GM13977 (cell line): ENCODE measurements at regions of chr13 and their contacts with region 1.

Region 1: DNA sequence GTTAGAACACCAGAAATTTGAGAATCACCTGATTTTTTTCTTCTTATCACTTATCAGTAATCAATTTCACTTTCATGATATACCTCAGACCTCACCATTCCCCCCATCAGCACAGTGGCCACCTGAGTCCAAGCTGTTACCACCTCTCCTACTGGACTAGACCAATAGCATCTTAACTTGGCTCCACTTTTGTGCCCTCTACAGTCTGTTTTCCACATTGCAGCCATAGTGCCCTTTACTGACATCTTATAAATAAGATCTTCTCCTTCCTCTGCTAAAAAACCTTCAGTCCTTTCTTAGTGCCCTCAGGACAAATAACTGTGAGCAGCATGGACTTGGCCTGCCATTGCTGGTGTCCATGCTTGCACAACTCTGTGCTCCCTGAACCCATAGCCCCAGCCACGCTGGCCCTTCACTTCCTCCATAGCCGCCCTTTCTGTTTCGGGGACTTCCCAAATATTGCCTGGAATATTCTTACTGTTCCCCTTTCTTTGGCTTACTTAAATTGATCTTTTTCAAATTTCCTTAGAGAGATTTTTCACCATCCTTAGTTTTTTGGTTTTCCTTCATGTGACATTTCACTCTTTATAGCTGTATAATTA is 380.8 kb downstream of the LMO7 start:
- DNase-seq: peak; percentile 18
- CTCF ChIP-seq: peak; percentile 68

Region 2: GRCh38 chr13:75687150-75687763 is 329.6 kb before region 1 on chr13:
- in situ Hi-C with region 1: loop called (anchors 25 kb)
- DNase-seq: no peak
- CTCF ChIP-seq: peak; percentile 52